Activated CD8-positive, alpha-beta T cell treated with anti-CD3 and anti-CD28 coated beads, Interleukin-2, amount 10 ng/mL, durations not matched to agents 7 days and 5 days (primary cell): ENCODE measurements at regions of chr11 and their contacts with region 1.

Region 1: GRCh38 chr11:63478896-63479295 is 12.1 kb downstream of the PLAAT5 start:
- DNase-seq: peak; percentile 68
- ATAC-seq: peak; percentile 61
- H3K4me3 Mint-ChIP-seq: no peak overlapping the region
- H3K27ac Mint-ChIP-seq: no peak overlapping the region
- H3K4me1 Mint-ChIP-seq: no peaks in the 10 kb centered on the region
- H3K27me3 Mint-ChIP-seq: peaks cover 15% of the 10 kb centered on the region

Region 2: GRCh38 chr11:63352144-63352543 is 126.8 kb before region 1 on chr11:
- CTCF ChIA-PET with region 1: no interaction called
- POLR2A ChIA-PET with region 1: no interaction called
- DNase-seq: no peak
- ATAC-seq: no peak
- H3K4me3 Mint-ChIP-seq: no peak overlapping the region
- H3K27ac Mint-ChIP-seq: no peak overlapping the region
- H3K4me1 Mint-ChIP-seq: no peaks in the 10 kb centered on the region
- H3K27me3 Mint-ChIP-seq: peaks cover 3% of the 10 kb centered on the region

Region 3: GRCh38 chr11:63490551-63491239 is 11.8 kb after region 1 on chr11 and contains the start of gene PLAAT5:
- CTCF ChIA-PET with region 1: interaction called, 29 read pairs
- POLR2A ChIA-PET with region 1: no interaction called
- DNase-seq: no peak
- ATAC-seq: peak; percentile 78
- H3K4me3 Mint-ChIP-seq: peak within 1 kb of the TSS; percentile 74
- H3K27ac Mint-ChIP-seq: no peak within 1 kb of the TSS
- H3K4me1 Mint-ChIP-seq: peaks cover 12% of the 10 kb centered on the region
- H3K27me3 Mint-ChIP-seq: peaks cover 62% of the 10 kb centered on the region
- total RNA-seq, gene PLAAT5: 0.11 to 0.68 TPM

Region 4: DNA sequence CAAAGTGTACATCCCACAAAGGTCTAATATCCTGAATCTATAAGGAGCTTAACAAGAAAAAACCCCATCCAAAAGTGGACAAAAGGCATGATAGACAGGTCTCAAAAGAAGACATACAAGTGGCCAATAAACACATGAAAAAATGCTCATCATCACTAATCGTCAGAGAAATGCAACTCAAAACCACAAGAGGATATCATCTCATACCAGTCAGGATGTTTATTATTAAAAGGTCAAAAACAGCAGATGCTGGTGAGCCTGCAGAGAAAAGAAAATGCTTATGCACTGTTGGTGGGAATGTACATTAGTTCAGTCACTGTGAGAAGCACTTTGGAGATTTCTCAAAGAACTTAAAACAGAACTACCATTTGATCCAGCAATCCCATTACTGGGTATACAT is 39.7 kb after region 1 on chr11:
- CTCF ChIA-PET with region 1: interaction called, 10 read pairs
- POLR2A ChIA-PET with region 1: no interaction called
- DNase-seq: no peak
- ATAC-seq: no peak
- H3K4me3 Mint-ChIP-seq: no peak overlapping the region
- H3K27ac Mint-ChIP-seq: peak overlapping the region; percentile 33
- H3K4me1 Mint-ChIP-seq: peaks cover 15% of the 10 kb centered on the region
- H3K27me3 Mint-ChIP-seq: no peaks in the 10 kb centered on the region

Region 5: GRCh38 chr11:63553741-63554151 is 74.8 kb after region 1 on chr11:
- CTCF ChIA-PET with region 1: interaction called, 18 read pairs
- POLR2A ChIA-PET with region 1: no interaction called
- DNase-seq: peak; percentile 73
- ATAC-seq: peak; percentile 74
- H3K4me3 Mint-ChIP-seq: peak overlapping the region; percentile 75
- H3K27ac Mint-ChIP-seq: peak overlapping the region; percentile 100
- H3K4me1 Mint-ChIP-seq: peaks cover 59% of the 10 kb centered on the region
- H3K27me3 Mint-ChIP-seq: no peaks in the 10 kb centered on the region

Region 6: GRCh38 chr11:63573881-63574855 is 95.3 kb after region 1 on chr11:
- CTCF ChIA-PET with region 1: interaction called, 10 read pairs
- POLR2A ChIA-PET with region 1: no interaction called
- DNase-seq: peak; percentile 73
- ATAC-seq: peak; percentile 95
- H3K4me3 Mint-ChIP-seq: peak overlapping the region; percentile 66
- H3K27ac Mint-ChIP-seq: peak overlapping the region; percentile 82
- H3K4me1 Mint-ChIP-seq: peaks cover 21% of the 10 kb centered on the region
- H3K27me3 Mint-ChIP-seq: peaks cover 2% of the 10 kb centered on the region

Region 7: DNA sequence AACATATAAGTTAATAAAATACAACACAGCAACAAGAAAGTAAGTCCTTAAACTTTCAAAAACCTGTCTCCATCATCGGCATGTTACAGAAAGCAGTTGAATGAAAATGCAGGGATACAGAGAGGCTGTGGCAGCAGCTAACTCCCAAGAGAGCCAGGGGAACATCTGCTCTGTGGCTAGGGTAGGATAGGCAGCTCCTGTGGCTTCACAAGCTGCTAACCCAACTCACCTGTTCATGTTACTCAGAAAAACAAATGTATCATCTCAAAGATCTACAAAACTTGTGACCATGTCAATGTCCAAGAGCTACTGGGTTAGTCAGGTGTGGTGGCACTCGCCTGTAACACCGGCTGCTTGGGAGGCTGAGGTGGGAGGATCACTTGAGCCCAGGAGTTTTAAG is 150.5 kb after region 1 on chr11:
- CTCF ChIA-PET with region 1: interaction called, 198 read pairs
- POLR2A ChIA-PET with region 1: no interaction called
- DNase-seq: no peak
- ATAC-seq: no peak
- H3K4me3 Mint-ChIP-seq: no peak overlapping the region
- H3K27ac Mint-ChIP-seq: no peak overlapping the region
- H3K4me1 Mint-ChIP-seq: peaks cover 4% of the 10 kb centered on the region
- H3K27me3 Mint-ChIP-seq: no peaks in the 10 kb centered on the region

Region 8: GRCh38 chr11:63738720-63739360 is 259.9 kb after region 1 on chr11:
- CTCF ChIA-PET with region 1: interaction called, 46 read pairs
- POLR2A ChIA-PET with region 1: no interaction called
- DNase-seq: peak; percentile 74
- ATAC-seq: no peak
- H3K4me3 Mint-ChIP-seq: no peak overlapping the region
- H3K27ac Mint-ChIP-seq: no peak overlapping the region
- H3K4me1 Mint-ChIP-seq: peaks cover 2% of the 10 kb centered on the region
- H3K27me3 Mint-ChIP-seq: no peaks in the 10 kb centered on the region